ENCODE measurements at regions of chr2 and their contacts with region 1.

Region 1: GRCh38 chr2:28869494-28870145 is 489 bp downstream of the TRMT61B start:
- DNase-seq: no peak
- H3K4me3 ChIP-seq: peak overlapping the region; percentile 73 to 94 (median 86)
- H3K27ac ChIP-seq: peak overlapping the region; percentile 77 to 86 (median 84)
- H3K4me1 ChIP-seq: peaks cover 18 to 56% (median 41%) of the 10 kb centered on the region in 4 donors
- H3K27me3 ChIP-seq: no peaks in the 10 kb centered on the region
- CTCF ChIP-seq: no peak
- EP300 ChIP-seq: no peak
- POLR2A ChIP-seq: no peak

Region 2: DNA sequence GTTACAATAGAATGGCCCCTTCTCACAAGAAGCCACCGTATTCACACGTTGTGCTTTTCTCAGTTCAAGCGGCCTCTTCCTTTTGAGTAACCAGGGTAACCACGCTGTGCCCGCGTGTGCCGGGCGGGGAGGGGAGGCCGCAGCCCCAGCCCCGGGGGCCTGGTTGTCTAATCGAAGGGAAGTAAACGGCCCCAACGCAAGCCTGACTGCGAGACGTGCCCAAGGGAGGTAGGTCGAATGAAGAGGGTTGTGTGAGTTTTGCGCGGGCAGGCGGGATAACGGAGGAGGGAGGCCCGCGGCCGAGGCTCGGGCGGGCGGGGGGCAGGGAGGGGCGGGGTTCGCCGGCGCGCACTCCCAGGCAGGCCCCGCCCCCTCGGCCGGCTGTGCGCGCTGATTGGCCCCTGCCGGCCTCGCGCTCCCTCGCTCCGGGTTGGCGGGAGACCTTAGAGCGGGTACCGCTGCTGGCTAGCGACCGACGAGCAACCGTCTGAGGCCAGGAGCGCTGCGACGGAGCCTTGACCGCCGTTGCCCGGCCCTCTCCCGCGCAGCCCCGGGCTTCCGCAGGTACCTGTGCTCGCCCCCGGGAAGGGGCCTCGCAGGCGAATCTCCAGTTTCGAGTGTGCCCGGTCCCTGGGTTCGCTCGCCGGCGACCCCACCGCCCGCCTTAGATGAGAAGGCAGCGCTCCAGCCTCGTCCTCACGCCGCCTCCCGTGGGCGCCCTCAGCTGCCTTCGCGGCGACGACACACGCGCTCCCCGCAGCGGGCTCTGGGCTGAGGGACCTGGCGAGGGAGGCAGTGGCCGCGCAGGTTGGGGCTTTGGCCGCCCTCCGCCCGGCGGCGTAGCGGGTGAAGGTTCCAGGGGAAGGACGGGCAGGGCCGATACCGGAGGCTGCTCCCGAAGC is 59.0 kb before region 1 on chr2 and contains the start of gene SPDYA:
- intact Hi-C with region 1: loop called (anchors 10 kb)
- DNase-seq: peak; percentile 93
- H3K4me3 ChIP-seq: peak within 1 kb of the TSS; percentile 54 to 66 (median 56)
- H3K27ac ChIP-seq: peak within 1 kb of the TSS; percentile 53 to 70 (median 66)
- H3K4me1 ChIP-seq: peaks cover 19 to 25% (median 22%) of the 10 kb centered on the region in 4 donors
- H3K27me3 ChIP-seq: no peaks in the 10 kb centered on the region
- CTCF ChIP-seq: peak in 2 of 3 experiments; percentile 4 to 9
- EP300 ChIP-seq: no peak
- POLR2A ChIP-seq: no peak
- total RNA-seq, gene SPDYA: 0.33 to 3.0 (median 0.91) TPM